GM12878 (cell line): ENCODE measurements at regions of chr3 and their contacts with region 1.

Region 1: GRCh38 chr3:59313365-59313764 is 263.5 kb upstream of the CFAP20DC start:
- DNase-seq: no peak
- ATAC-seq: peak; percentile 93
- H3K4me3 ChIP-seq: no peak overlapping the region
- H3K27ac ChIP-seq: no peak overlapping the region
- H3K4me1 ChIP-seq: no peaks in the 10 kb centered on the region
- H3K27me3 ChIP-seq: no peaks in the 10 kb centered on the region
- CTCF ChIP-seq: peak; percentile 63 to 85 (median 76)
- EP300 ChIP-seq: no peak
- POLR2A ChIP-seq: no peak
- RAD21 ChIP-seq: peak; percentile 99

Region 2: DNA sequence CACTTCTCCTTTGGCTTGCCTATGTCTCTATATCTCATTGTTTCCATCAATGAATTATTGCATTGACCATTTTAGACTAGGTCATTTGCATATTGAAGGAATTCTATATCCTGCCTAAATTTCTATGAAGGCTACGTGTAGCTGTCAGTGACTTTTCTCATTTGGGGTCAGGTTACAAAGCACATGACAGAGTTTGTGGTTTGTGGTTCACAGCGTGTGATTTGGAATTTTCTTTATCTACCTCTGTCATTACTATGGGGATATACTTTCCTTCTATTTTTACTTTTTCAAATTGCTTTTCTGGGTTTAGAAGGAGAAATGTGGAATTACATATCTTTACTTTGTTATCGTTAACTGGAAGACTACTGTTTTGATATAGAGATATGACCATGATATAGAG is 53.8 kb after region 1 on chr3:
- CTCF ChIA-PET with region 1: interaction called, 17 read pairs
- POLR2A ChIA-PET with region 1: no interaction called
- RAD21 ChIA-PET with region 1: interaction called, 12 read pairs
- SMC1A ChIA-PET with region 1: interaction called, 5 read pairs
- in situ Hi-C with region 1: no loop called
- intact Hi-C with region 1: no loop called
- DNase-seq: no peak
- ATAC-seq: no peak
- H3K4me3 ChIP-seq: no peak overlapping the region
- H3K27ac ChIP-seq: no peak overlapping the region
- H3K4me1 ChIP-seq: no peaks in the 10 kb centered on the region
- H3K27me3 ChIP-seq: no peaks in the 10 kb centered on the region
- CTCF ChIP-seq: no peak
- EP300 ChIP-seq: no peak
- POLR2A ChIP-seq: no peak
- RAD21 ChIP-seq: no peak

Region 3: GRCh38 chr3:59424268-59425010 is 111.1 kb after region 1 on chr3:
- CTCF ChIA-PET with region 1: interaction called, 24 read pairs
- POLR2A ChIA-PET with region 1: no interaction called
- RAD21 ChIA-PET with region 1: interaction called, 5 read pairs
- SMC1A ChIA-PET with region 1: interaction called, 5 read pairs
- in situ Hi-C with region 1: no loop called
- intact Hi-C with region 1: no loop called
- DNase-seq: no peak
- ATAC-seq: peak; percentile 83
- H3K4me3 ChIP-seq: no peak overlapping the region
- H3K27ac ChIP-seq: no peak overlapping the region
- H3K4me1 ChIP-seq: peaks cover 24% of the 10 kb centered on the region
- H3K27me3 ChIP-seq: no peaks in the 10 kb centered on the region
- CTCF ChIP-seq: no peak
- EP300 ChIP-seq: no peak
- POLR2A ChIP-seq: no peak
- RAD21 ChIP-seq: no peak

Region 4: DNA sequence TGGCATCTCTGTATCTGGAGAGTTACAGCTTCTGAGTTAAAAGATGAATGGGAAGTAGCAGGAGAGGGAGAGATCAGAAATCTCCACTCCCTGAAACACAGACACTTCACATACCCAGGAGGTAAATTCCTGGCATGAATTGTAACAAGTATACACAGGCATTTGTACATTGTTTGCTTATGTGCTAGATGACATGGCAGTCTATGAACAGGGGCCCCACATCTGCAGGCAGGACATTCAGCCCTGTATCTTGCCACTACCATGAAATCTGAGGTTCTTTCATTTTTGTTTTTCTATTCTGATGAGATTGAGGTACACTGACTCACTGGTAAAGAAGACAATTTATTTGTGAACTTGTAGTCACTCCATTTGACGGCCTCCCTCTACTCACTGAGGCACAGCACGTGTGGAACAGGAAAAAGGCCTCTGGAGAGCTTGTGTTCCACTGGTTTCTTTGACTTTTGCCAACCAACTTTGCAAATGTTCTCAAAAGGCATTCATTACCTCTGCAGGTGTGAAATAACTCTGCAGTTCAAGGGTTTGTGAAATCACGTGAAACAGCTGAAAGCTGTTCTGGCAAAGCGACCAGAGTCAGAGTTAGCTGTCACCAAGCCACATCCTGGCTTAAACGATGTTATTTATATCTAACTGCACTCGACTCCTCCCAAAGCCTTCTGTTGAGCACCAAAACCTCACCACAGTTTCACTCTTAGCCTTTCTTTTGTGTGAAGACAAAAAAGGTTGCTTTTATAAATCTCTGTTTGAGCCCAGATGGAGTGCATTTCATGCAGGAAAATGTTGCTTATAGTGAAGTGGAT is 137.8 kb after region 1 on chr3:
- CTCF ChIA-PET with region 1: interaction called, 11 read pairs
- POLR2A ChIA-PET with region 1: no interaction called
- RAD21 ChIA-PET with region 1: interaction called, 11 read pairs
- SMC1A ChIA-PET with region 1: interaction called, 27 read pairs
- in situ Hi-C with region 1: no loop called
- intact Hi-C with region 1: loop called (anchors 5 kb)
- DNase-seq: peak; percentile 97
- ATAC-seq: peak; percentile 93
- H3K4me3 ChIP-seq: peak overlapping the region; percentile 41; the same call in 1 of the 2 replicates
- H3K27ac ChIP-seq: peak overlapping the region; percentile 87
- H3K4me1 ChIP-seq: peaks cover 34% of the 10 kb centered on the region
- H3K27me3 ChIP-seq: no peaks in the 10 kb centered on the region
- CTCF ChIP-seq: no peak
- EP300 ChIP-seq: peak; percentile 85 to 95; a peak in 3 of 4 replicates
- POLR2A ChIP-seq: peak; percentile 40; the same call in 1 of the 2 replicates
- RAD21 ChIP-seq: peak; percentile 16; the same call in 1 of the 2 replicates

Region 5: DNA sequence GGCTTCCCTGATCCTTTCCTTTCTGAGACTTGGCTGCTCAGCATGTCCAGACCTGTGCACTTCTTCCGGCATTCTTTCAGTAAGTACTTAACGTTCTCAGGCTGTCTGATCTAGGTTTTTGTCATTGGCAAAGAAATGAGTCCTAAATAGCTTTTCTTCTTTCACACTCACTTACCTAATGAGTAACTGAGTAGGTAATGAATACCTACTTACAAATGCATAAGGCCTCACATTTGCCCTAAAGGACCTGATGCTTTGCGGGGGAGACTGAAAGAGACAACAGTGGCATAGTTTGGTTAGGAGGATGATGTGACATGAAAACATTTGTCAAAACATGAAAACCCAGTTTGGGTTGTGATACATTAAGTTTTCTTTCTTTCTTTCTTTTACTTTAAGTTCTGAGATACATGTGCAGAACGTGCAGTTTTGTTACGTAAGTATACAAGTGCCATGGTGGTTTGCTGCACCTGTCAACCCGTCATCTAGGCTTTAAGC is 253.2 kb after region 1 on chr3:
- CTCF ChIA-PET with region 1: interaction called, 25 read pairs
- POLR2A ChIA-PET with region 1: no interaction called
- RAD21 ChIA-PET with region 1: interaction called, 9 read pairs
- SMC1A ChIA-PET with region 1: interaction called, 29 read pairs
- in situ Hi-C with region 1: no loop called
- intact Hi-C with region 1: no loop called
- DNase-seq: peak; percentile 68
- ATAC-seq: peak; percentile 98
- H3K4me3 ChIP-seq: no peak overlapping the region
- H3K27ac ChIP-seq: peak overlapping the region; percentile 54
- H3K4me1 ChIP-seq: peaks cover 32% of the 10 kb centered on the region
- H3K27me3 ChIP-seq: no peaks in the 10 kb centered on the region
- CTCF ChIP-seq: no peak
- EP300 ChIP-seq: peak; percentile 87 to 93; a peak in 3 of 4 replicates
- POLR2A ChIP-seq: no peak
- RAD21 ChIP-seq: no peak

Region 6: GRCh38 chr3:59809710-59810444 is 496.5 kb after region 1 on chr3:
- CTCF ChIA-PET with region 1: interaction called, 27 read pairs
- POLR2A ChIA-PET with region 1: no interaction called
- RAD21 ChIA-PET with region 1: interaction called, 17 read pairs
- SMC1A ChIA-PET with region 1: interaction called, 8 read pairs
- in situ Hi-C with region 1: no loop called
- intact Hi-C with region 1: no loop called
- DNase-seq: no peak
- ATAC-seq: peak; percentile 49
- H3K4me3 ChIP-seq: no peak overlapping the region
- H3K27ac ChIP-seq: no peak overlapping the region
- H3K4me1 ChIP-seq: no peaks in the 10 kb centered on the region
- H3K27me3 ChIP-seq: no peaks in the 10 kb centered on the region
- CTCF ChIP-seq: peak in 2 of 3 experiments; percentile 10 to 34; a peak in 2 of 6 replicates
- EP300 ChIP-seq: no peak
- POLR2A ChIP-seq: no peak
- RAD21 ChIP-seq: peak; percentile 44

Region 7: DNA sequence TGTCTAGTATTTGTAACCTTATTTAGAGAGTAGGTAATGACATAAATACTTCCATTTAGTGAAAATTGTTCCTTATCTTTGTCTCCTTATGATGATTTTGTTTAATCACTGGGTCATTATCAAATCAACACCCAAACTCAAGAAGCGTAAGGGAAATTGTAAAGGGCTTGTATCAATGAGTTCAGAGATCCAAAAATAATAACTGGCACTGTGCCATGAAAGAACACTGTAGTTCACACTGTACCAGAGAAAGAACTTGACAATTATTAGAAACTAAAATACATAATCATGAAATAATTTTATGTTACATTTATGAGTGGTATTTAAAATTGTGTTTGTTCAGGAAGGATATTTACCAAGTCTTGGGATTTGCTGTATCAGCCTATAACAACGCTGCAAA is 1042.5 kb after region 1 on chr3:
- CTCF ChIA-PET with region 1: no interaction called
- POLR2A ChIA-PET with region 1: no interaction called
- RAD21 ChIA-PET with region 1: no interaction called
- SMC1A ChIA-PET with region 1: no interaction called
- in situ Hi-C with region 1: no loop called
- intact Hi-C with region 1: no loop called
- DNase-seq: no peak
- ATAC-seq: no peak
- H3K4me3 ChIP-seq: no peak overlapping the region
- H3K27ac ChIP-seq: no peak overlapping the region
- H3K4me1 ChIP-seq: no peaks in the 10 kb centered on the region
- H3K27me3 ChIP-seq: no peaks in the 10 kb centered on the region
- CTCF ChIP-seq: no peak
- EP300 ChIP-seq: no peak
- POLR2A ChIP-seq: no peak
- RAD21 ChIP-seq: no peak